ENCODE measurements at regions of chr13 and their contacts with region 1.

Region 1: GRCh38 chr13:43206838-43207237 is 183.5 kb downstream of the DNAJC15 start:
- DNase-seq: no peak
- H3K4me3 ChIP-seq: no peak overlapping the region
- H3K27ac ChIP-seq: no peak overlapping the region
- H3K4me1 ChIP-seq: no peaks in the 10 kb centered on the region
- H3K27me3 ChIP-seq: no peaks in the 10 kb centered on the region
- CTCF ChIP-seq: no peak

Region 2: GRCh38 chr13:43143591-43143990 is 63.2 kb before region 1 on chr13:
- intact Hi-C with region 1: no loop called
- DNase-seq: no peak
- H3K4me3 ChIP-seq: no peak overlapping the region
- H3K27ac ChIP-seq: no peak overlapping the region
- H3K4me1 ChIP-seq: no peaks in the 10 kb centered on the region
- H3K27me3 ChIP-seq: no peaks in the 10 kb centered on the region
- CTCF ChIP-seq: no peak

Region 3: GRCh38 chr13:43232874-43233266 is 26.0 kb after region 1 on chr13:
- intact Hi-C with region 1: loop called (anchors 2 kb)
- DNase-seq: no peak
- H3K4me3 ChIP-seq: no peak overlapping the region
- H3K27ac ChIP-seq: no peak overlapping the region
- H3K4me1 ChIP-seq: no peaks in the 10 kb centered on the region
- H3K27me3 ChIP-seq: no peaks in the 10 kb centered on the region
- CTCF ChIP-seq: no peak

Measured in tibial artery (tissue), 4 donors.